PC-9 (cell line): ENCODE measurements at regions of chr5 and their contacts with region 1.

Region 1: DNA sequence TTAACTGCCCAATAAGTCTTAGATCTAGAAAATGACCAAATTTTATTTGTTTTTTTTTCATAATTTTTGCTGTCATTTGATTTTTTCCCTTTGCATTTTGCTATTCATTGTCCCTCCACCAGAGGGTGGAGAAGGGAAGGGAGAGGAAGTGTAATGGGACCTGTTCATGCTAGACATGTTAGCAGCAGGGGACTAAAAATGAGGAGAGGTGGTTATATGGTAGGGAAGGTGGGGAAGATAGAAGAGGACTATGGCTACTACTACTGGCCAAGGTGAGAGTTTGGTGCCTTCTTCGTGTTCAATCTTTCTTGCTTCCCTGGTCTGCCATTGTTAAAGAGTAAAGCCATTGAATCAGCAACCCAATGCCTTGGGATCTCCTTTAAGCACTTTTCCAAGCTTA is 6.4 kb downstream of the GRIA1 start:
- DNase-seq: peak in 1 of 2 experiments; percentile 8
- H3K4me3 ChIP-seq: no peak overlapping the region
- H3K27ac ChIP-seq: no peak overlapping the region
- H3K4me1 ChIP-seq: no peaks in the 10 kb centered on the region
- H3K27me3 ChIP-seq: peaks cover 25% of the 10 kb centered on the region
- CTCF ChIP-seq: peak; percentile 74

Region 2: GRCh38 chr5:153459051-153459743 is 37.6 kb before region 1 on chr5:
- CTCF ChIA-PET with region 1: no interaction called
- POLR2A ChIA-PET with region 1: no interaction called
- intact Hi-C with region 1: no loop called
- DNase-seq: no peak
- H3K4me3 ChIP-seq: no peak overlapping the region
- H3K27ac ChIP-seq: no peak overlapping the region
- H3K4me1 ChIP-seq: no peaks in the 10 kb centered on the region
- H3K27me3 ChIP-seq: no peaks in the 10 kb centered on the region
- CTCF ChIP-seq: no peak

Region 3: DNA sequence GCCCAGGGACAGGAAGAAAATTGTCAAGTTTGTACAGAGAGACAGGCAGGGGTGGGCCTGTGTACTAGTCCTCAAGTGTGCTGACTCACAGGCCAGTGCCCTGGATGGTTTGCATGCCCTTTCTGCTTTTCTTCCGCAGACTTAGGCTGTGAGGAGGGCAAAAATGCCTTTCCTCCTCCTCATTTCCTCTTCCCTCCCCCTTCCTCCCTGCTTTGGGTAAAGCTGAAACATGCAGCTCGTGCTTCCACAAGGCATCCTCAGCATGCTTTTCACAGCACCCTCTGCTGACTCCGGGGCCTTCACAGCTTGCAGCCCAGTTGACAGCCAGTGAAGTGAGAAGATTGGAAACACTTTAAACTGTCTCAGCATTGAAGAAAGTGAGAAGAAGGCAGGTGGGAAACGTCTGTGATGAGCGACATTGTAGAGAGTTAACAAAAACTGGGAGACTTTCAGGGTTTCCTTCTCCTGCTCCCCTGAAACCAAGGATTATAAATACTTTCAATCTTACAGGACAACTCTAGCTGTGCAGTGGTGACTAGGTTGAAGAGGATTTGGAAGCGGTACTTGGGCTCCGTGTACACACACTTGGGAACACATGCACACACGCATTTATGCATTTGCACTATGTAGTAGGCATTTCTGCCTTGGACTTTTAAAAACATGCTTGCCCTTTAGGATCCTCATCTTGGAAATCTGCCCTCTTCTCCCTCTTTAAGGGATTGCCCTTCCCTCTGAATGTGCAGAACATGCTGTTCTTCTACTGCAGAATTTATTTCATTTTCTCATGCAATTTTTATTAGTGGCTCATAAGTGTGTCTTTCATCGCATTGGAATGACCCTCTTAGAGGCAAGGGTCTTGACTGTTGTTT is 132.4 kb after region 1 on chr5:
- CTCF ChIA-PET with region 1: no interaction called
- POLR2A ChIA-PET with region 1: no interaction called
- intact Hi-C with region 1: loop called (anchors 5 kb)
- DNase-seq: peak; percentile 40 to 64
- H3K4me3 ChIP-seq: no peak overlapping the region
- H3K27ac ChIP-seq: no peak overlapping the region
- H3K4me1 ChIP-seq: peaks cover 8% of the 10 kb centered on the region; the same call in 1 of the 2 replicates
- H3K27me3 ChIP-seq: no peaks in the 10 kb centered on the region
- CTCF ChIP-seq: no peak

Region 4: DNA sequence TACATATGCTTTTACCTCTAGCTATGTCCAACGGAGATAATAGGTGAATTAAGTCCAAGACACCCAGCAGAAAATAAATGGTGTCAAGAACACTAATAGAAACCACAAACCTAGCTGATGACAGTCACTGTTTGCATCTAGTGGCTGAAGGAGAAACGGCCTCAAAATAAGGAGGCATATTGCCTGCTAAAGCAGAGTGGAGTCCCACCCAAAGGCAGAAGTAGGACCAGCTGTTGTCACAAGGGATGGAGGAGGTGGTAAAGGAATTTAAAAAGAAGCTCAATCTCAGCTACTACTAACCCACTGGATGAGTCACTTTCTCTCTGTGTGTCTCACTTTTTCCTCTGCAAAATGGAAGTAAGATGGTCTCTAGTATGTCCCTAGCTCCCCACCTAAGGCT is 218.0 kb after region 1 on chr5:
- CTCF ChIA-PET with region 1: no interaction called
- POLR2A ChIA-PET with region 1: no interaction called
- intact Hi-C with region 1: loop called (anchors 2 kb)
- DNase-seq: no peak
- H3K4me3 ChIP-seq: no peak overlapping the region
- H3K27ac ChIP-seq: no peak overlapping the region
- H3K4me1 ChIP-seq: no peaks in the 10 kb centered on the region
- H3K27me3 ChIP-seq: no peaks in the 10 kb centered on the region
- CTCF ChIP-seq: no peak

Region 5: GRCh38 chr5:153756540-153756939 is 259.7 kb after region 1 on chr5:
- CTCF ChIA-PET with region 1: no interaction called
- POLR2A ChIA-PET with region 1: no interaction called
- intact Hi-C with region 1: loop called (anchors 5 kb)
- DNase-seq: no peak
- H3K4me3 ChIP-seq: no peak overlapping the region
- H3K27ac ChIP-seq: no peak overlapping the region
- H3K4me1 ChIP-seq: no peaks in the 10 kb centered on the region
- H3K27me3 ChIP-seq: peaks cover 8% of the 10 kb centered on the region; the same call in 1 of the 2 replicates
- CTCF ChIP-seq: no peak

Region 6: GRCh38 chr5:153964880-153965645 is 468.2 kb after region 1 on chr5:
- CTCF ChIA-PET with region 1: interaction called, 4 read pairs
- POLR2A ChIA-PET with region 1: no interaction called
- intact Hi-C with region 1: loop called (anchors 1 kb)
- DNase-seq: peak in 1 of 2 experiments; percentile 51
- H3K4me3 ChIP-seq: no peak overlapping the region
- H3K27ac ChIP-seq: no peak overlapping the region
- H3K4me1 ChIP-seq: no peaks in the 10 kb centered on the region
- H3K27me3 ChIP-seq: peaks cover 31% of the 10 kb centered on the region
- CTCF ChIP-seq: peak; percentile 95